Posterior vena cava (tissue), 2 donors: ENCODE measurements at regions of chr11 and their contacts with region 1.

Region 1: GRCh38 chr11:106101819-106102218 is 24.4 kb downstream of the AASDHPPT start:
- DNase-seq: no peak

Region 2: DNA sequence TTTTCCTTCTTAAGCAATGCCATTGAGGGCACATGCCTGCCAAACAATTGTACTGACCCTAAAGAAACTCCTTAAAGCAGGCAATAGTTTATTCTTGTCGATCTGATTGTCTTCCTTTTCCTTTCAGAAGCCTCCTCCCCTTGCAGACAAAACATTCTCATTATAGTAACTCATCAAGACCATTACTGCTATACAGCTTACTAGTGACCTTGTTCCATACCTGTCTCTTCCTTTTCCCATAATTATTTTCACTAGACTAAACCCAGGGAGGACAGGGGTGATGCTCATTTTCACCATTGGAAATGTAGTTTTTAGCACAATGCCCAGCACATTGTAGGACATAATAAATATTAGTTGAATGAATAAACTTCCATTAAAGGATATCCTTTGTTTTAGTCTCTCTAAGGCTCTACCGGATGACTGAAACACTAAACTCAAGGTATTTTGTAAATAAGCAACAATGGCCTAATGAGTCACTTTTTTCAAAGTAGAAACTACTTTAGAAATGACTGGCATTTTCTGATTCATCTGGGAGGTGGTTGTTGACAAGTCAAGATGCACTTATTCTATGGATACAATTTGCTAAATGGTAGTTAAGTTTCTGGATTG is 70.5 kb before region 1 on chr11:
- intact Hi-C with region 1: loop called in 1 of 2 experiments (anchors 2 kb)
- DNase-seq: no peak